ENCODE measurements at regions of chr5 and their contacts with region 1.

Region 1: DNA sequence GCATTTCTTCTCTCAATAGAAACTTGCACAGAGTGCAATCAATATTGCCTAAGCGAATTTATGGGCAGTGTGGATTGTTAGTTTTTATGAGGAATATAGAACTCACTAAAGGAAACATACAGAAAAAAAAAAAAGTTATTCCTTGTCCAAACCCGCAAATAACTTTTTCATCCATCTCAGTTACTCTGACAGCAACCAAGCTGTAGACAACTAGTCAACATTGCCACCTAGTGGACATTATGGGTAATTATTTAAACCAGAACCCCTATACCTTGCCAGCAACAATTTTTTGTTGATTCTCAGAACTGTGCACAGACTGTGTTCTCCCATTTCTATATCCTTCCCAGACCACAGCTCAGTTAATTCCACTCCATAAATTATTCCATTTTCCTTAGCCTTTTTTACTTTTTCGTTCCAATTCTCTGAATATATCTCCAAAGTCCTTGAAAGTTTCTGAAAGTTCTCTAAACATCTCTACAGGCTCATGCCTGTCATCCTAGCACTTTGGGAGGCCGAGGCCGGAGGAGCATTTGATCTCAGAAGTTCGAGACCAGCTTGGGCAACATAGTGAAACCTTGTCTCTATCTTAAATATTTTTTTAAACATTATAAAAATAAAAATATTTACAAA is 2.6 kb upstream of the AFAP1L1 start:
- DNase-seq: peak; percentile 67 to 71
- ATAC-seq: peak in 1 of 2 experiments; percentile 22; a peak in 2 of 6 replicates
- H3K4me3 ChIP-seq: no peak overlapping the region
- H3K27ac ChIP-seq: no peak overlapping the region
- H3K4me1 ChIP-seq: peaks cover 9% of the 10 kb centered on the region; the same call in 1 of the 3 replicates
- CTCF ChIP-seq: peak; percentile 82
- EP300 ChIP-seq: no peak
- POLR2A ChIP-seq: no peak
- RAD21 ChIP-seq: peak; percentile 71 to 75

Region 2: GRCh38 chr5:149128023-149128875 is 140.8 kb before region 1 on chr5:
- CTCF ChIA-PET with region 1: interaction called, 27 read pairs
- POLR2A ChIA-PET with region 1: no interaction called
- DNase-seq: peak; percentile 30 to 76
- ATAC-seq: peak; percentile 88 to 97
- H3K4me3 ChIP-seq: no peak overlapping the region
- H3K27ac ChIP-seq: no peak overlapping the region
- H3K4me1 ChIP-seq: no peaks in the 10 kb centered on the region
- CTCF ChIP-seq: peak; percentile 60
- EP300 ChIP-seq: no peak
- POLR2A ChIP-seq: no peak
- RAD21 ChIP-seq: peak; percentile 31 to 57; a peak in 4 of 5 replicates

Region 3: GRCh38 chr5:149133795-149134780 is 135.0 kb before region 1 on chr5:
- CTCF ChIA-PET with region 1: interaction called, 27 read pairs
- POLR2A ChIA-PET with region 1: no interaction called
- DNase-seq: peak; percentile 62 to 72
- ATAC-seq: peak; percentile 92 to 96
- H3K4me3 ChIP-seq: no peak overlapping the region
- H3K27ac ChIP-seq: peak overlapping the region; percentile 73 to 78
- H3K4me1 ChIP-seq: peaks cover 21% of the 10 kb centered on the region
- CTCF ChIP-seq: no peak
- EP300 ChIP-seq: no peak
- POLR2A ChIP-seq: no peak
- RAD21 ChIP-seq: no peak

Region 4: GRCh38 chr5:149238583-149238982 is 30.5 kb before region 1 on chr5:
- CTCF ChIA-PET with region 1: interaction called, 10 read pairs
- POLR2A ChIA-PET with region 1: no interaction called
- DNase-seq: no peak
- ATAC-seq: peak; percentile 55 to 69; a peak in 3 of 6 replicates
- H3K4me3 ChIP-seq: no peak overlapping the region
- H3K27ac ChIP-seq: no peak overlapping the region
- H3K4me1 ChIP-seq: no peaks in the 10 kb centered on the region
- CTCF ChIP-seq: no peak
- EP300 ChIP-seq: no peak
- POLR2A ChIP-seq: no peak
- RAD21 ChIP-seq: peak in 1 of 2 experiments; percentile 33; a peak in 3 of 5 replicates

Region 5: DNA sequence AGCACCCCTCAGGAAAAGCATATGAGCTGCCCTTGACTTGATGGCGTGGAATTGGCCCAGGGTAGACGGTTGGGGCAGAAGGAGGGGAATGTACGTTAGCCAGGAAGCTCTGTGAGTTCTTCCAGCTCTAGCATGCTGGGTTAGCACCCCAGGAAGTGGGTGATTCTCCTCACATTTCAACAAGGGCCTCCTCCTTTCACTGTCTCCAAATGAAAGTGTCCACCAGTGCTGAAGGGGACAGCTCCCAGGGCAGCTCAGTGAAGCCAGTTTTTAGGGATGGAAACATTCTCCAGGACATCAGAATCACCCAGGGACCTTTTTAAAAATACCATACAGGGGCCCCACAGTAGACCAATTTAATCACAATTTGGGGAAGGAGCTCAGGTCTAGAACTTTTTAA is 14.5 kb before region 1 on chr5:
- CTCF ChIA-PET with region 1: interaction called, 36 read pairs
- POLR2A ChIA-PET with region 1: no interaction called
- DNase-seq: no peak
- ATAC-seq: 0 out of 6 replicates have a peak, but pooled peaks of 1 of the 2 experiments have one; percentile 30
- H3K4me3 ChIP-seq: no peak overlapping the region
- H3K27ac ChIP-seq: no peak overlapping the region
- H3K4me1 ChIP-seq: no peaks in the 10 kb centered on the region
- CTCF ChIP-seq: no peak
- EP300 ChIP-seq: no peak
- POLR2A ChIP-seq: no peak
- RAD21 ChIP-seq: no peak

Measured in A549 (cell line).